Activated B cell treated with CpG ODN at 0.5 μM for 24 hours (primary cell): ENCODE measurements at regions of chr11 and their contacts with region 1.

Region 1: GRCh38 chr11:67373925-67374618 is 674 bp upstream of the CLCF1 start:
- DNase-seq: peak; percentile 63
- ATAC-seq: peak; percentile 47
- H3K4me3 Mint-ChIP-seq: peak overlapping the region; percentile 87
- H3K27ac Mint-ChIP-seq: peak overlapping the region; percentile 79
- H3K4me1 Mint-ChIP-seq: peaks cover 57% of the 10 kb centered on the region
- H3K27me3 Mint-ChIP-seq: no peaks in the 10 kb centered on the region
- CTCF ChIP-seq: no peak

Region 2: GRCh38 chr11:66790640-66791039 is 583.4 kb before region 1 on chr11:
- CTCF ChIA-PET with region 1: no interaction called
- POLR2A ChIA-PET with region 1: no interaction called
- intact Hi-C with region 1: no loop called
- DNase-seq: no peak
- ATAC-seq: no peak
- H3K4me3 Mint-ChIP-seq: no peak overlapping the region
- H3K27ac Mint-ChIP-seq: no peak overlapping the region
- H3K4me1 Mint-ChIP-seq: peaks cover 27% of the 10 kb centered on the region
- H3K27me3 Mint-ChIP-seq: no peaks in the 10 kb centered on the region
- CTCF ChIP-seq: no peak

Region 3: GRCh38 chr11:67271541-67272284 is 102.4 kb before region 1 on chr11:
- CTCF ChIA-PET with region 1: interaction called, 3 read pairs
- POLR2A ChIA-PET with region 1: interaction called, 15 read pairs
- intact Hi-C with region 1: no loop called
- DNase-seq: peak; percentile 57
- ATAC-seq: peak; percentile 18
- H3K4me3 Mint-ChIP-seq: peak overlapping the region; percentile 92
- H3K27ac Mint-ChIP-seq: peak overlapping the region; percentile 98
- H3K4me1 Mint-ChIP-seq: peaks cover 95% of the 10 kb centered on the region
- H3K27me3 Mint-ChIP-seq: no peaks in the 10 kb centered on the region
- CTCF ChIP-seq: no peak

Region 4: DNA sequence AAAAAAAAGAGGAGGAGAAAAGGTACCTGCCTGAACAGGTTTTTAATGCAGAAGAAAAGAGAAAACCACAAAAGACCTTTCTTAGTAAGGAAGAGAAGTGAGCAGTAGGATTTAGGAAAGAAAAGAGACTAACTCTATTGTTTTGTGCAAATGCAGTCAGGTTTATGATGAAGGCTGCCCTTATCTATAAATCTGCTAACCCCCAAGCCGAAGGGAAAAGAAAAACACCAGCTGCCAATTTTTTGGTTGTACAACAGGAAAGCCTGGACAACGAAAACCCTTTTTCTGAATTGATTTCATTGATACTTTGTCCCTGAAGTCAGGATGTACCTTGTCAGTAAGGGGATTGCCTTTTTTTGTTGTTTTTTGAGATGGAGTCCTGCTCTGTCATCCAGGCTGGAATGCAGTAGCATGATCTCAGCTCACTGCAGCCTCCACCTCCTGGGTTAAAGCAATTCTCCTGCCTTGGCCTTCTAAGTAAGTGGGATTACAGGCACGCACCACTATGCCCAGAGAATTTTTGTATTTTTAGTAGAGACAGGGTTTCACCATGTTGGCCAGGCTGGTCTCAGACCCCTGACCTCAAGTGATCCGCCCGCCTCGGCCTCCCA is 41.9 kb before region 1 on chr11:
- CTCF ChIA-PET with region 1: no interaction called
- POLR2A ChIA-PET with region 1: no interaction called
- intact Hi-C with region 1: no loop called
- DNase-seq: no peak
- ATAC-seq: no peak
- H3K4me3 Mint-ChIP-seq: no peak overlapping the region
- H3K27ac Mint-ChIP-seq: no peak overlapping the region
- H3K4me1 Mint-ChIP-seq: no peaks in the 10 kb centered on the region
- H3K27me3 Mint-ChIP-seq: no peaks in the 10 kb centered on the region
- CTCF ChIP-seq: no peak

Region 5: GRCh38 chr11:67345920-67346799 is 27.9 kb before region 1 on chr11:
- CTCF ChIA-PET with region 1: interaction called, 735 read pairs
- POLR2A ChIA-PET with region 1: interaction called, 1,307 read pairs
- intact Hi-C with region 1: no loop called
- DNase-seq: no peak
- ATAC-seq: peak; percentile 46
- H3K4me3 Mint-ChIP-seq: no peak overlapping the region
- H3K27ac Mint-ChIP-seq: peak overlapping the region; percentile 88
- H3K4me1 Mint-ChIP-seq: peaks cover 71% of the 10 kb centered on the region
- H3K27me3 Mint-ChIP-seq: no peaks in the 10 kb centered on the region
- CTCF ChIP-seq: no peak

Region 6: GRCh38 chr11:68251765-68252164 is 877.7 kb after region 1 on chr11:
- CTCF ChIA-PET with region 1: no interaction called
- POLR2A ChIA-PET with region 1: no interaction called
- intact Hi-C with region 1: no loop called
- DNase-seq: no peak
- ATAC-seq: no peak
- H3K4me3 Mint-ChIP-seq: no peak overlapping the region
- H3K27ac Mint-ChIP-seq: no peak overlapping the region
- H3K4me1 Mint-ChIP-seq: no peaks in the 10 kb centered on the region
- H3K27me3 Mint-ChIP-seq: no peaks in the 10 kb centered on the region
- CTCF ChIP-seq: no peak